ENCODE measurements at regions of chr20 and their contacts with region 1.

Region 1: DNA sequence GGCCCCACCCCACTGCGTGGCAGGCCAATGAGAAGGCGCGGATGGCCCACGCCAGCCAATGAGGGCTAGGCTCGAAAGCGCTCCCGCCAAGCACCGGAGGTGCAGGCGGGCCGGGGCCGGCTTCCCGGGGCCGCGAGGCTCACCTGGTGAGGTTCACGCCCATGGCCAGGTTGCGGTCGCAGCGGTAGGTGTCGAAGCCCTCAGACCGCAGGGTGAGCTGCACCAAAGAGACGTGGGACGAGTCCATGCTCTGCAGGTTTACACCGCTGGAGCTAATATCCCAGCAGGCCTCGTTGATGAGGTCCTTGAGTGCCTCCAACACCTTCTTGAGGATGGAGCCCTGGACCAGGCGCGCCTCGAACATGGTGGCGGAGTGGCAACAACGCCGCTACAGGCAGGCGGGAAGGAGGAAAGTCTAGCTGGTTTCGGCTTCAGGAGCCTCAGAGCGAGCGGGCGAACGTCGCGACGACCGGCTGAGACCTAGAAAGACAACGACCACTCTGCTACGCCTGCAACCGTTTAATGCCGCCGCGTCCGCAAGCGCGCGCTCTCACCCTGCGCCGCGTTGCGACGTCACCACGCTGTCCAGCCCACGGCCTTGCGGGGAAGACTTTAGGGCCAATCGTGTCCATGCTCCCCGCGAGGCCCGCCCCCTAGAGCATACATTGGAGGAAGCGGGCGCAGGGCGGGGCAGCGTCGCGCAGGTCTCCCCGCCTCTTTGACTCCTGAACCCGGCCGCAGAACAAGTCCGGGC is at the start of gene PCNA:
- DNase-seq: peak; percentile 91 to 97
- H3K4me3 ChIP-seq: peak within 1 kb of the TSS; percentile 94
- H3K27ac ChIP-seq: peak within 1 kb of the TSS; percentile 49
- H3K4me1 ChIP-seq: peaks cover 29% of the 10 kb centered on the region
- H3K27me3 ChIP-seq: no peaks in the 10 kb centered on the region
- CTCF ChIP-seq: peak; percentile 40; the same call in 1 of the 2 replicates
- total RNA-seq, gene PCNA: 164 and 207 TPM in 2 replicates

Region 2: DNA sequence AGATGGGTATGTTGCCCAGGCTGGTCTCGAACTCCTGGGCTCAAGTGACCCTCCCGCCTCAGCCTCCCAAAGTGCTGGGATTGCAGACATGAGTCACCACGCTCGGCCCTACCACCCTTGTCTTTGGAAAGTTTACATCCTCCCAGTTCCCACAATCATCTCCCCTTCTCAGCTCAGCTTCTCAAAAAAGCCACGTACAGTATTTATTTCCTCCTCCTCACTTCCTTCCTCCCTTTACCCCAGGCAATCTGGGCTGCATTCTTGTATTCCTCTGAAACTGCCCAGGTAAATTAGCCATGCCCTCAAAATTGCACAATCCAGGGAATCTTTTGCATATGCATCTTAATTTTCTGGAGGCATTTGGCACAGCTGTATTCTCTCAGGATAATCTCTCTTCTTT is 110.9 kb before region 1 on chr20:
- CTCF ChIA-PET with region 1: no interaction called
- POLR2A ChIA-PET with region 1: interaction called, 14 read pairs
- intact Hi-C with region 1: no loop called
- DNase-seq: peak; percentile 60 to 92
- H3K4me3 ChIP-seq: no peak overlapping the region
- H3K27ac ChIP-seq: peak overlapping the region; percentile 93
- H3K4me1 ChIP-seq: peaks cover 14% of the 10 kb centered on the region
- H3K27me3 ChIP-seq: no peaks in the 10 kb centered on the region
- CTCF ChIP-seq: no peak

Region 3: GRCh38 chr20:5100684-5101347 is 18.8 kb before region 1 on chr20:
- CTCF ChIA-PET with region 1: no interaction called
- POLR2A ChIA-PET with region 1: no interaction called
- intact Hi-C with region 1: no loop called
- DNase-seq: peak; percentile 56 to 72
- H3K4me3 ChIP-seq: no peak overlapping the region
- H3K27ac ChIP-seq: peak overlapping the region; percentile 64
- H3K4me1 ChIP-seq: 0 out of 2 replicates have a peak, but pooled peaks cover 4% of the 10 kb centered on the region
- H3K27me3 ChIP-seq: no peaks in the 10 kb centered on the region
- CTCF ChIP-seq: peak; percentile 93

Region 4: GRCh38 chr20:5156675-5157448 is 37.2 kb after region 1 on chr20:
- CTCF ChIA-PET with region 1: no interaction called
- POLR2A ChIA-PET with region 1: interaction called, 12 read pairs
- intact Hi-C with region 1: no loop called
- DNase-seq: peak; percentile 51 to 91
- H3K4me3 ChIP-seq: no peak overlapping the region
- H3K27ac ChIP-seq: peak overlapping the region; percentile 98
- H3K4me1 ChIP-seq: peaks cover 91% of the 10 kb centered on the region
- H3K27me3 ChIP-seq: no peaks in the 10 kb centered on the region
- CTCF ChIP-seq: no peak

Region 5: GRCh38 chr20:5197847-5198650 is 78.4 kb after region 1 on chr20:
- CTCF ChIA-PET with region 1: interaction called, 15 read pairs
- POLR2A ChIA-PET with region 1: no interaction called
- intact Hi-C with region 1: no loop called
- DNase-seq: no peak
- H3K4me3 ChIP-seq: no peak overlapping the region
- H3K27ac ChIP-seq: no peak overlapping the region
- H3K4me1 ChIP-seq: no peaks in the 10 kb centered on the region
- H3K27me3 ChIP-seq: no peaks in the 10 kb centered on the region
- CTCF ChIP-seq: no peak